ENCODE measurements at regions of chr11 and their contacts with region 1.

Region 1: DNA sequence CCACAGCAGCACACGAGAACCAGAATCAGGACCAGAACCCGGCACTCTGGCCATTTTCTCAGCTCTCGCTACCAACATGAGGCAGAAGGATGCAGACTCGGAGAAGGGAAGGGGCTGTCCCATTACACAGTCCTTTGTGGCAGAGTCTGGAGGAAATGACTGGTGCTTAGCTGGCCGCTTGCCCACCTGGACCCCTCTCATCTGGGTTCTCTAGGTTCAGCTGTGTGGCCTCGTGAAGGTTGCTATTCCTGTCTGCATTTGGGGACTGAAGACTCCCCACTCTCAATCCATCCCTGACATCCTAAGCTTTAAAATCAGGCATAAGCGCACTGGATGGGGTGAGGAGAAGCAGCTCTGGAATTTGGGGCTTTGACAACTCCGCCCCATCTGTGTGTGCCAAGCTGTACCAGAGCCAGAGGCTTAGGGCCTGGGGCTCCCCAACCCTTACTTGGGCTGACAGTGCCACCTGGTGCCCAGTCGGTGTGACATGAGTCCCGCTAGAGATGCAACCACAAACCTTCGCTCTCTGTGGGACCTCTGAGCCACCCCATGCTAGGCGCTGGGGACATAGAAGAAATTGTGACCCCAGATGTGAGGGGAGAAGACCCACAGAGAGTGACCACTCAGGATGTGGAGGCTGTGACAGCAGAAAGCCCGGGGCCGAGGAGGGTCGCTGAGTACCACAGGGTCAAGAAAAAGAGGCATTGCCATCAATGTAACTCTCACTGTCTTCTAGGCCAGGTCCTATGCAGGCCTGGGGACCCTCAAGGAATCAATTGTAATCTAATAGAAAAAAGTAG is 35.9 kb upstream of the FCHSD2 start:
- DNase-seq: peak; percentile 90
- H3K4me3 ChIP-seq: no peak overlapping the region
- H3K27ac ChIP-seq: peak overlapping the region; percentile 77 to 83
- H3K4me1 ChIP-seq: peaks cover 46% of the 10 kb centered on the region
- H3K27me3 ChIP-seq: no peaks in the 10 kb centered on the region
- CTCF ChIP-seq: peak; percentile 74 to 88 (median 76)
- POLR2A ChIP-seq: no peak

Region 2: DNA sequence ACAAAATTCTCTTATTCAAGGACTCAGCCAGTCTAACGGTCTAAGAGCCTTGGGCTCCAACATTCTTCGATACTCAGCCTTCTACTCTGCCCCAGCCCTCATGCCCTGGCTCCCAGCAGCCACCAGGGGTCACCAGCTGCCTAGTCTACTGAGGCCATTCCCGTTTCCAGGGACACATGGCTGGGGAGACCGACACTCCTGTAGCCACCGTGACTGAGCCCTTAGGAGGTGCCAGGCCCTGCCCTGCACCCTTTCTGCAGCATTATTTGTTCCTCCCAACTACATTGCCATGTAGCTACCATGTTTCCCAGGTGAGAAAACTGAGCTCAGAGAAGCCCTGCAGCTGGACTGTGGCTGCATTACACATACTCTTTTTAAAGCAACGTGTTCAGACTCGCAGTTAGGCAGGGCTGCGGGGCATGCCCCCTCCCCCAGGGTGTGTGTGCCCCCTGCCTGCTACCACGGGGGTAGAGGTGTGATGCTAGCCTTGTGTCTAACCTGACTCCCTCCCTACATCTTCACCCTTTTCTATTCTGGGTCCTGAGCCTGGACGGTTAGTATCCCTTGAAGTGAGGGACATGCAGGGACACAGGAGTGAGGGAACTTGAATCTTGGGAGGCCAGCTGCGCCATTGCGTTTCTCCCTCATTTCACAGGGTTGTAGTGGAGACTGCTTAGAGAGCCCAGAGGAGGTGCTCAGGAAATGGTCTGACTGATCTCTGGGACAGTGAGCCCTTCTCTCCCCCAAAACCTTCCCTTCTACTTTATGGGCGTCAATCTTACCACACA is 346.3 kb before region 1 on chr11:
- intact Hi-C with region 1: loop called (anchors 5 kb)
- DNase-seq: peak; percentile 91
- H3K4me3 ChIP-seq: no peak overlapping the region
- H3K27ac ChIP-seq: peak overlapping the region; percentile 51 to 86
- H3K4me1 ChIP-seq: peaks cover 56% of the 10 kb centered on the region
- H3K27me3 ChIP-seq: no peaks in the 10 kb centered on the region
- CTCF ChIP-seq: peak; percentile 81 to 95 (median 93)
- POLR2A ChIP-seq: no peak

Region 3: GRCh38 chr11:72951193-72951592 is 226.8 kb before region 1 on chr11:
- intact Hi-C with region 1: no loop called
- DNase-seq: no peak
- H3K4me3 ChIP-seq: no peak overlapping the region
- H3K27ac ChIP-seq: no peak overlapping the region
- H3K4me1 ChIP-seq: no peaks in the 10 kb centered on the region
- H3K27me3 ChIP-seq: no peaks in the 10 kb centered on the region
- CTCF ChIP-seq: no peak
- POLR2A ChIP-seq: no peak

Measured in testis (tissue), 5 donors.